ENCODE measurements at regions of chr1 and their contacts with region 1.

Region 1: DNA sequence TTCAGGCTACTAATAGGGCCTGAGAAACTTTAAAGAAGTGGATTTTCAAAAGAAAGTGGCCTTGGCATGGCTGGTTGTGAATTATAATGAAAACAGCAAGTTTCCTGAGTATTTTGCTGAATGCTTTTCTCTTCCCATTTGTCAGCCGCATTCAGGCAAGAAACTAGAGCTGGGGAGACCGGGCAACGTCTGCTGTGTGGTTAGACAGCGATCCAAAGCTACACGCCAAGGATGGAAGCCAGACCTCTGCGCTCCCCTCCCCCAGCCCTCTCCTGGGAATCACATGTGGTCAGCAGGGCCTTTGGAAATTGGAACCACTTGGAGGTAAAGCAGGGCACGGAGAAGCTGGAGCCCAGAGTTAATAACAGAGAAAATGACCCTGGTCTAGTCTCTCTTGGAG is 114.1 kb upstream of the CD34 start:
- DNase-seq: no peak
- H3K4me3 ChIP-seq: no peak overlapping the region
- H3K4me3 Mint-ChIP-seq: no peak overlapping the region
- H3K27ac Mint-ChIP-seq: no peak overlapping the region
- H3K4me1 ChIP-seq: no peaks in the 10 kb centered on the region
- H3K4me1 Mint-ChIP-seq: peaks cover 6% of the 10 kb centered on the region
- H3K27me3 ChIP-seq: no peaks in the 10 kb centered on the region; the same call in 1 of the 2 replicates
- H3K27me3 Mint-ChIP-seq: peaks cover 5% of the 10 kb centered on the region
- CTCF ChIP-seq: no peak

Region 2: GRCh38 chr1:208036109-208036808 is 11.2 kb after region 1 on chr1:
- CTCF ChIA-PET with region 1: interaction called, 12 read pairs
- POLR2A ChIA-PET with region 1: no interaction called
- intact Hi-C with region 1: no loop called
- DNase-seq: peak in 1 of 2 experiments; percentile 34
- H3K4me3 ChIP-seq: no peak overlapping the region
- H3K4me3 Mint-ChIP-seq: no peak overlapping the region
- H3K27ac Mint-ChIP-seq: no peak overlapping the region
- H3K4me1 ChIP-seq: no peaks in the 10 kb centered on the region
- H3K4me1 Mint-ChIP-seq: no peaks in the 10 kb centered on the region
- H3K27me3 ChIP-seq: no peaks in the 10 kb centered on the region
- H3K27me3 Mint-ChIP-seq: peaks cover 5% of the 10 kb centered on the region
- CTCF ChIP-seq: peak in 1 of 2 experiments; percentile 49

Region 3: DNA sequence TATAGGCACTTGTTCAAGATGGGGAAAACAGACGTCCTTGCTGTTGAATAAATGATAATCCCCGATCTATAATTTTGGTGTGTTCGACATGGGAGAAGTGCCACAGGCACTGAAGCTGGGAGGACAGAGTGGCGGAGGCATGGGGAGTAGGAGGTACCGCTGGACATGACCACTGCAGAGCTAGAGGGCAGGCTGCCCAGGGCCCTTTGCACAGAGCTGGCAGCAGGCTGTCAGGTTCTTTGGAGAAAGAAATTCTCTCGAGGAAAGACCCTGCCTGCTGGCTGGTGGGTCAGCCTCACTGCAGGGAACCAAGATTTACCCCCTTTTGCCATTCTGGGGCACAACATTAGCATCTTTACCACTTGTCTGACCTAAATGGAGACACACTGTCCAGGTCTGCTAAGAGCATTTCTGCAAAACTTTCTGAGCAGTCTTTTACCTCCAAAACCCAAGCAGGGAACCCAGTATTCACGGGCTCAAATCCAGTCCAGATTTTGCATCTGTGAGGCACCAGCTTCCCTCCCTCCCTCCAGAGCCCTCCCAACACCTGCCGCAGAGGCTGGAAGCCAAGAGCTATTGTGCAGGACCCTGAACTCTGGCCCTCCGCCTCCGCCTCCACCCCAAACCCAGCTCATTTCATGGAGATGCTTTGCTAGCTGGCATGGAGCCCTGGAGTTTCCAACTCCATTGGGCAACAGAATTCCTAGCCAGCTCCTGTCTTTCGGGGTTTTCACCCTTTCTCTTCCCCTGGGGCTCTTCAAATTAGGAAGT is 76.8 kb after region 1 on chr1:
- CTCF ChIA-PET with region 1: interaction called, 10 read pairs
- POLR2A ChIA-PET with region 1: no interaction called
- intact Hi-C with region 1: no loop called
- DNase-seq: no peak
- H3K4me3 ChIP-seq: no peak overlapping the region
- H3K4me3 Mint-ChIP-seq: no peak overlapping the region
- H3K27ac Mint-ChIP-seq: no peak overlapping the region
- H3K4me1 ChIP-seq: peaks cover 8% of the 10 kb centered on the region; the same call in 1 of the 2 replicates
- H3K4me1 Mint-ChIP-seq: no peaks in the 10 kb centered on the region
- H3K27me3 ChIP-seq: no peaks in the 10 kb centered on the region
- H3K27me3 Mint-ChIP-seq: no peaks in the 10 kb centered on the region
- CTCF ChIP-seq: no peak

Region 4: DNA sequence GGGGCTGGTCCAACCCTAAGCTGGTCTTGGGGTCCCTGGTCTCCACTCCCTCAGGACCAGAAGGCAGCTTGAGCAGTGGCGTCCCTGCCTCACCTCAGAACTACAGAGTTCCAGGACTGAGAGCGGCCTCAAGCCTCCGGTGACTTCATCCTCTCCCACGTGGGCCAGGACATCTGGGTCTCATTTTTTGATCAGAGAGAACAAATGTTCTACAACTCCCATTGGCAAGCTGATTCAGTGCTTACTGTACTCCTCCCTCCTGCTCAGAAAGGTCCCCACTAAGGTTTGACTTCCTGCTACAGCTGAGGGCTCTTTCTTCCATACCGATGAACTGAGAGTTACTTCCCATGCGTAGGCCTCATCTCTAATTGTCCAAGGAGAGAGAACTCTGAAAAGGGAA is 140.6 kb after region 1 on chr1:
- CTCF ChIA-PET with region 1: no interaction called
- POLR2A ChIA-PET with region 1: no interaction called
- intact Hi-C with region 1: no loop called
- DNase-seq: no peak
- H3K4me3 ChIP-seq: no peak overlapping the region
- H3K4me3 Mint-ChIP-seq: no peak overlapping the region
- H3K27ac Mint-ChIP-seq: no peak overlapping the region
- H3K4me1 ChIP-seq: peaks cover 17% of the 10 kb centered on the region
- H3K4me1 Mint-ChIP-seq: peaks cover 19% of the 10 kb centered on the region
- H3K27me3 ChIP-seq: no peaks in the 10 kb centered on the region
- H3K27me3 Mint-ChIP-seq: no peaks in the 10 kb centered on the region
- CTCF ChIP-seq: no peak

Region 5: DNA sequence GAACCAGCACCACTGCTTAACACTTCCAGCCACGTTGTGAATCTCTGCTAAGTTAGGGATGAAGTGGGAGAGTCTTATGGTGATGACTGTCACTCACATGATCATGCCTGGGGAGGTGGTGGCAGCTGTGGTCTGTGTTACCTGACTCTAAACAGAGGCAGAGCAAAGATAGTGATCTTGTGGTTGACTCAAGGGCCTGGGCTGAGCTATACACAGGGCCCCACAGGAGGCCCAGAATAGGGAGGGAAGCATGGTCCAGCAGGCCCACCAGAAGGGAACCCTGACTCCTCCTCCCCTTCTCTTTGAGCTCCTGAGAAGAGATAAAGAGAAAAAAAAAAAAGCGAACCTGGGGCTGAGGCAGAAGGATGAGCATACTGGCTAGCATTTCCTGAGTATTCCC is 164.2 kb after region 1 on chr1:
- CTCF ChIA-PET with region 1: interaction called, 15 read pairs
- POLR2A ChIA-PET with region 1: no interaction called
- intact Hi-C with region 1: loop called (anchors 5 kb)
- DNase-seq: no peak
- H3K4me3 ChIP-seq: no peak overlapping the region
- H3K4me3 Mint-ChIP-seq: no peak overlapping the region
- H3K27ac Mint-ChIP-seq: no peak overlapping the region
- H3K4me1 ChIP-seq: peaks cover 12% of the 10 kb centered on the region
- H3K4me1 Mint-ChIP-seq: peaks cover 20% of the 10 kb centered on the region
- H3K27me3 ChIP-seq: no peaks in the 10 kb centered on the region
- H3K27me3 Mint-ChIP-seq: no peaks in the 10 kb centered on the region
- CTCF ChIP-seq: no peak

Region 6: GRCh38 chr1:208251911-208252835 is 227.1 kb after region 1 on chr1:
- CTCF ChIA-PET with region 1: interaction called, 19 read pairs
- POLR2A ChIA-PET with region 1: no interaction called
- intact Hi-C with region 1: no loop called
- DNase-seq: peak; percentile 83 to 88
- H3K4me3 ChIP-seq: no peak overlapping the region
- H3K4me3 Mint-ChIP-seq: peak overlapping the region; percentile 5
- H3K27ac Mint-ChIP-seq: no peak overlapping the region
- H3K4me1 ChIP-seq: peaks cover 7% of the 10 kb centered on the region
- H3K4me1 Mint-ChIP-seq: peaks cover 6% of the 10 kb centered on the region
- H3K27me3 ChIP-seq: no peaks in the 10 kb centered on the region
- H3K27me3 Mint-ChIP-seq: peaks cover 18% of the 10 kb centered on the region
- CTCF ChIP-seq: peak; percentile 86 to 88